ENCODE measurements at regions of chr10 and their contacts with region 1.

Region 1: GRCh38 chr10:92573798-92574547 is at the start of gene IDE:
- DNase-seq: peak; percentile 95
- H3K4me3 ChIP-seq: peak within 1 kb of the TSS; percentile 71 to 97 (median 86)
- H3K27ac ChIP-seq: peak within 1 kb of the TSS; percentile 86 to 95 (median 94)
- H3K4me1 ChIP-seq: peaks cover 21 to 37% (median 34%) of the 10 kb centered on the region in 4 donors
- H3K27me3 ChIP-seq: no peaks in the 10 kb centered on the region
- CTCF ChIP-seq: peak; percentile 71 to 91 (median 74)
- EP300 ChIP-seq: no peak
- POLR2A ChIP-seq: no peak
- total RNA-seq, gene IDE: 27.0 to 33.1 (median 30.7) TPM

Region 2: GRCh38 chr10:92517034-92517655 is 56.8 kb before region 1 on chr10:
- intact Hi-C with region 1: loop called (anchors 1 kb)
- DNase-seq: no peak
- H3K4me3 ChIP-seq: no peak overlapping the region
- H3K27ac ChIP-seq: no peak overlapping the region
- H3K4me1 ChIP-seq: peaks cover 0 to 2% (median 0%) of the 10 kb centered on the region in 4 donors
- H3K27me3 ChIP-seq: no peaks in the 10 kb centered on the region
- CTCF ChIP-seq: peak; percentile 74 to 81 (median 78)
- EP300 ChIP-seq: no peak
- POLR2A ChIP-seq: no peak

Measured in esophagus muscularis mucosa (tissue), 4 donors.